ENCODE measurements at regions of chr2 and their contacts with region 1.

Region 1: DNA sequence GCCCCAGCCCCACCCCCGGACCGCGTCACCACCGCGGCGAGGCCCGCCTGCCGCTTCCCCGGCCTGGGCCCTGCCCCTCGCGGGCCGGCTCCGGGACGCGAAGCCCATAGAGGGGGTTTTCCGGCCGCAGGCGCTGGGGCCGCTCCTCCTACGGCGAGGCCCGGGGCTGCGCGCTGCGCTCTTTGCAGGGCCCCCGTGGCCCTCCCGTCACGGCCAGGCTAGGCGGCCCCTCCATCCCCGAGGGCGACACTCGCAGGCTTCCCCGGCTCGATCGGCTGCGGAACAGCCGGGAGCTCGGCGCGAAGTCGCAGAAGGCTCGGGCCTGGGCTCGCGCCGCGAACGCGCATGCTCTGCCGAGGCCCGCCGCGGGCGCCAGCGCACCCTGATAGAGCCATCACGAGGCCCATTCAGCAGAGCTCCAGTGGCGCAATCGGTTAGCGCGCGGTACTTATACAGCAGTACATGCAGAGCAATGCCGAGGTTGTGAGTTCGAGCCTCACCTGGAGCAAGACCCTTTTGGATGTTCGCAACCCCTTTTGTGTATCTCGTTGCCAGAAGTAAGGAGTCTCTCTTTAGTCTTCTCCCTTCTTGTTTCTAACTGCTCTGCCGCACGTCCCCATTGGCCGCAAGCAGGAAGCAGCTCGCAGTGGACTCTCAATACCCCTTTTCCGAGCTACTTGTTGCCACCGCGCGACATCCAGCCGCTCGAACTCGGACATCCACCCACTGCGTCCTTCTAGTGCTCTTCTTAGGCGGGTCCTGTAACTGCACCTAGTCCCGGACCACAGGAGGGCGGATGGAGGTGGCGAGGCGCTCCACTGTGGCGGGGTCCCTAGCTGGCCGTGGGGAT is 18.0 kb upstream of the HAAO start:
- DNase-seq: peak; percentile 94

Region 2: GRCh38 chr2:43461453-43462073 is 651.2 kb after region 1 on chr2:
- in situ Hi-C with region 1: loop called (anchors 10 kb)
- DNase-seq: no peak

Measured in Caki2 (cell line).